Heart left ventricle (tissue), 16 donors: ENCODE measurements at regions of chr5 and their contacts with region 1.

Region 1: GRCh38 chr5:148746826-148747535 is 79.4 kb upstream of the ADRB2 start:
- DNase-seq: no peak
- ATAC-seq: peak in 1 of 4 donors; percentile 15
- H3K4me3 ChIP-seq: no peak overlapping the region
- H3K27ac ChIP-seq: peak overlapping the region in 1 of 12 donors; percentile 40
- H3K4me1 ChIP-seq: peaks cover 0 to 42% (median 3%) of the 10 kb centered on the region in 12 donors
- H3K27me3 ChIP-seq: no peaks in the 10 kb centered on the region
- CTCF ChIP-seq: no peak
- POLR2A ChIP-seq: no peak

Region 2: DNA sequence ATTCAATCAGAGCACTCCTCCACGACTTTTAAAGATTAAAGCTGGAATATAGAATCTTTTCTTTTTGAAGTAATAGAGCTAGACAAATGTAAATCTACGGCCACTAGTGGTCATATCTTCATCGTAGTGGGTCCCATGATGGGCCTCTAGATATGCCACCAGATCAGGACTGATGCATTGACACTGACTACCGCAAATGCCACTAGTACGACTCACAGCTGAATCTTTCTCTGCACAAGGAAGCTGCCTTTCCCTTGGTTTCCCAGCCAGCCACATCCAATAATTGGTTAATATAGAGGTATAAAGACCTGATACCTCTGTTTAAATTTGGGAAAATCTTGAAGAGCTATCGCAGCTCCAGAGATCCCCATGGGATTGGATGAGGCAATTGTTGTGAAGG is 41.7 kb after region 1 on chr5:
- intact Hi-C with region 1: loop called in 1 of 10 experiments (anchors 5 kb)
- DNase-seq: no peak
- ATAC-seq: no peak
- H3K4me3 ChIP-seq: no peak overlapping the region
- H3K27ac ChIP-seq: no peak overlapping the region
- H3K4me1 ChIP-seq: peaks cover 0 to 8% (median 0%) of the 10 kb centered on the region in 12 donors
- H3K27me3 ChIP-seq: no peaks in the 10 kb centered on the region
- CTCF ChIP-seq: no peak
- POLR2A ChIP-seq: no peak

Region 3: GRCh38 chr5:148805326-148806290 is 58.6 kb after region 1 on chr5:
- intact Hi-C with region 1: loop called in 2 of 10 experiments (anchors 5 kb)
- DNase-seq: peak in 4 of 5 donors; percentile 44 to 81 (median 62)
- ATAC-seq: peak; percentile 94 to 97 (median 96)
- H3K4me3 ChIP-seq: no peak overlapping the region
- H3K27ac ChIP-seq: peak overlapping the region; percentile 32 to 83 (median 68)
- H3K4me1 ChIP-seq: peaks cover 0 to 66% (median 20%) of the 10 kb centered on the region in 12 donors
- H3K27me3 ChIP-seq: no peaks in the 10 kb centered on the region
- CTCF ChIP-seq: no peak
- POLR2A ChIP-seq: peak in 1 of 2 donors; percentile 23

Region 4: GRCh38 chr5:148816782-148817181 is 69.8 kb after region 1 on chr5:
- intact Hi-C with region 1: no loop called
- DNase-seq: no peak
- ATAC-seq: no peak
- H3K4me3 ChIP-seq: no peak overlapping the region
- H3K27ac ChIP-seq: no peak overlapping the region
- H3K4me1 ChIP-seq: peaks cover 0 to 27% (median 0%) of the 10 kb centered on the region in 12 donors
- H3K27me3 ChIP-seq: no peaks in the 10 kb centered on the region
- CTCF ChIP-seq: no peak
- POLR2A ChIP-seq: no peak

Region 5: GRCh38 chr5:148887123-148887881 is 140.3 kb after region 1 on chr5:
- intact Hi-C with region 1: no loop called
- DNase-seq: no peak
- ATAC-seq: no peak
- H3K4me3 ChIP-seq: no peak overlapping the region
- H3K27ac ChIP-seq: no peak overlapping the region
- H3K4me1 ChIP-seq: no peaks in the 10 kb centered on the region
- H3K27me3 ChIP-seq: no peaks in the 10 kb centered on the region
- CTCF ChIP-seq: no peak
- POLR2A ChIP-seq: no peak

Region 6: DNA sequence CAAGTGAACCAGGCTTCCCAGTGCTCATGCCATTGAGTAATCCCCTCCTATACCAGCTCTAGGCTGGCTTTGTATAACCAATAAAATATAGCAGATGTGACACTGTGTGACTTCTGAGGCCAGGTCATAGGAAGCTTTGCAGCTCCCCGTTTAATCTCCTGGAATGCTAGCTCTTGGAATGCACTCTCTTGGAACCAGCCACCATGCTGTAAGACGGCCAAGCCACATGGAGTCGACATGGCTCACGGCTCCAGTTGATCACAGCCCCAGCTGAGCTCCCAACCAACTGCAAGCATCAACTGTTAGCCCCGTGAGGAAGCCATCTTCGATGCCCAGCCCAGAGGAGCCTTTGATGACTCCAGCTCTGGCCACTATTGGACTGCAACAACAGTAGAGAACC is 241.3 kb after region 1 on chr5:
- intact Hi-C with region 1: no loop called
- DNase-seq: no peak
- ATAC-seq: peak in 1 of 4 donors; percentile 24
- H3K4me3 ChIP-seq: no peak overlapping the region
- H3K27ac ChIP-seq: no peak overlapping the region
- H3K4me1 ChIP-seq: no peaks in the 10 kb centered on the region
- H3K27me3 ChIP-seq: no peaks in the 10 kb centered on the region
- CTCF ChIP-seq: no peak
- POLR2A ChIP-seq: no peak